Posterior vena cava (tissue), 2 donors: ENCODE measurements at regions of chr22 and their contacts with region 1.

Region 1: DNA sequence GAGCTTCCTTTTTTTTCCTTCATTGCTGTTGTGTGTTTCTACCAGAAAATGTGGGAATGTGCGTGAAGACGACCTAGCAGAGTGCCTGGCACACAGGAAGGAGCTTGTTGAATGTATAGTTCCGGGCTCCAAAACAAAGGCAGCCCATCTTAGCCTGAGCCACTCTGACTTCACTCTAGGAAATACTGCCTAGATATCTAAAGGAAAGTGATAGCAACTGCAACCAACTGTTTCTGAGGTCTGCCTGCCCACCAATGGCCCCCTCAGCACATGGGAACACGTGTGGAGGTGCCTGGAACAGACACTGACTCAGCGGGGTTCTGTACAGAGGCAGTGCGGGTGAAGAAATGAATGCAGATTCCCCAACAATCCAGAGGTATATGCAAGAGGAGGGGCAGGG is 14.7 kb upstream of the XBP1 start:
- DNase-seq: no peak

Region 2: GRCh38 chr22:28798817-28799605 is 16.1 kb before region 1 on chr22:
- intact Hi-C with region 1: loop called in 1 of 2 experiments (anchors 1 kb)
- DNase-seq: peak; percentile 83